ENCODE measurements at regions of chr4 and their contacts with region 1.

Region 1: DNA sequence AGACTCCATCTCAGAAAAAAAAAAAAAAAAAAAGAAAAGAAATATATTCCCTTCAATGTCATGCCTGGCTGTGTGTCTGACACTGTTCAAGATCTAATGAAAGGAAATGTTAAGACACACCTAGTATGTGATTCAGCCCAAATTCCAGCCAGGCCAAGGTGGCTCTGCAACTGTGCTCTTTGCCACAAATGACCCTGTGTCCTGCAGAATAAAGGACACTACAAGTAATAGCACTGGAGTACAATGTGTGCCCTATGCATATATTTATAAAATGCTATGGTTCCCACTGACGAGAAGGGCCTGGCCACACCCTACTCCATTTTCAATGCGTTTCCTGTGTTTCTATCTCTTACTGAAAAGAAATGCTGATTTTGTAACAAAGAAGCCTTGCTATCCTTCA is 98.0 kb upstream of the SORBS2 start:
- DNase-seq: peak in 1 of 2 donors; percentile 16
- H3K4me3 ChIP-seq: no peak overlapping the region
- H3K27ac ChIP-seq: no peak overlapping the region
- H3K4me1 ChIP-seq: no peaks in the 10 kb centered on the region
- H3K27me3 ChIP-seq: no peaks in the 10 kb centered on the region
- CTCF ChIP-seq: no peak
- POLR2A ChIP-seq: no peak

Region 2: DNA sequence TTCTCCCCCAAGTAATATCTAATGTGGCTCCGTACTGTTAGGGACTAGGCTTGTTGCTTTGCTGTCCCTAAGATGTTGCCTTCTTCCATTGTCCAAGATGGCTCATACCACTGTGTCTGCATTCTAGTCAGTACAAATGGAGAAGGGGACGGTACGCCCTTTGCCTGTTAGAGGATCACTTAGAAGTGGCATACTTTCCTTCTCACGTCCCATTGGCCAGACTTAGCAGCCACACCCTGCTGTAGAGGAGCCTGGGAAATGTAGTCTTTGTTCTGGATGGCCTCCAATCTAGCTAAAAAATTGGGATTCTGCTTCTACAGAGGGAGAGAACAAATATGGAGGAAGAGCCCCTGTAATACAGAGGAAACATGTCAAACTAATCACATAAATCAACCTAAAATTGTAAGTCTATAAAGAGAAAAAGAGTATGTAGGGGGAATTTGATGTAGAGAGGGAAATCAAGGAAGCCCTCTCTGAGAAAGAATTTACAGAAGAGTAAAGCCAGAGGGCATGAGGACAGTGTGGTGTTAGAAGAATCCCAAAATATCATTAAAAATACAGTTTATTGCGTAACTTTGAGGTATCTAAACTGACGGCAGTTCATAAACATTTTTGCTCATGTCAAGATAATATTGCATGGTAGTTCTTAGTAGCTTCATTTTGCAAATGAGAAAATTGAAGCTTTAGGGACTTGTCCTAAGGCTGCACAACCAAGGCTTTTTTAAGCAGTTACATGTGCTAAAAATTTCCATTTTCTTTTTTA is 1245.3 kb before region 1 on chr4:
- intact Hi-C with region 1: no loop called
- DNase-seq: no peak
- H3K4me3 ChIP-seq: no peak overlapping the region
- H3K27ac ChIP-seq: no peak overlapping the region
- H3K4me1 ChIP-seq: no peaks in the 10 kb centered on the region
- H3K27me3 ChIP-seq: no peaks in the 10 kb centered on the region
- CTCF ChIP-seq: no peak
- POLR2A ChIP-seq: no peak

Region 3: GRCh38 chr4:185464184-185464583 is 445.8 kb before region 1 on chr4:
- intact Hi-C with region 1: loop called (anchors 5 kb)
- DNase-seq: no peak
- H3K4me3 ChIP-seq: no peak overlapping the region
- H3K27ac ChIP-seq: no peak overlapping the region
- H3K4me1 ChIP-seq: no peaks in the 10 kb centered on the region
- H3K27me3 ChIP-seq: no peaks in the 10 kb centered on the region
- CTCF ChIP-seq: no peak
- POLR2A ChIP-seq: no peak

Region 4: DNA sequence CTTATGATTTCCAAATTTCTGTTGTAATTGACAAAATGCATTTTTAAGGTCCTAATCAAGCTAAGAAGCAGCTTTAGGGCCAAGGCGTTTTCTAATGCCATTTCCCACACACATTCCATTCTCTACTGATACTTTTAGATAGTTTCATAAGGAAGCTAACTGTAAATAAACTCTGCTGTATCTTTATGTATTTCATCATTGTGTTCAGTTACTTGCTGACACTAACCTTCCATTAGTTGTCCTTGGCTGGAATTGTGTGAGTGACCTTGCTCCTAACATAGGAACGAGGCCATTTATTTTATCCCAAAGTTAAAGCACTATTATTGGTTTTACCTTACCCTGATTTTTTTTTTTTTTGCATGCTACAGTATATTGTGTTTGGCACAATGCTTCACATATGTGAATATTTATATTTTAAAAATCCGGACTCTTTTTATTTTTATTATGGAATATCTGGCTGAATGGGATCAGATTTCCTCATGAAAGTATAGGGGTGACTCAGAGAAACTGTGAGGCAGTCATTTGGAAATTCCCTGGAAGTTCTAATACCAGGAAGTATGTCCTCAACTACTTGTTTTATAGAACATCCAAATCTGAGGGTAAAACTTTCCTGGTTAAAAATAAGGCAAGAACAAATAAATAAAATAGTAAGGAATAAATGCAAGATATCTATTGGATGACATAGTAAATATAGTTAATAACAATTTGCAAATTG is 35.3 kb before region 1 on chr4:
- intact Hi-C with region 1: no loop called
- DNase-seq: no peak
- H3K4me3 ChIP-seq: no peak overlapping the region
- H3K27ac ChIP-seq: no peak overlapping the region
- H3K4me1 ChIP-seq: no peaks in the 10 kb centered on the region
- H3K27me3 ChIP-seq: no peaks in the 10 kb centered on the region
- CTCF ChIP-seq: no peak
- POLR2A ChIP-seq: no peak

Measured in vagina (tissue), 2 donors.